ENCODE measurements at regions of chr22 and their contacts with region 1.

Region 1: DNA sequence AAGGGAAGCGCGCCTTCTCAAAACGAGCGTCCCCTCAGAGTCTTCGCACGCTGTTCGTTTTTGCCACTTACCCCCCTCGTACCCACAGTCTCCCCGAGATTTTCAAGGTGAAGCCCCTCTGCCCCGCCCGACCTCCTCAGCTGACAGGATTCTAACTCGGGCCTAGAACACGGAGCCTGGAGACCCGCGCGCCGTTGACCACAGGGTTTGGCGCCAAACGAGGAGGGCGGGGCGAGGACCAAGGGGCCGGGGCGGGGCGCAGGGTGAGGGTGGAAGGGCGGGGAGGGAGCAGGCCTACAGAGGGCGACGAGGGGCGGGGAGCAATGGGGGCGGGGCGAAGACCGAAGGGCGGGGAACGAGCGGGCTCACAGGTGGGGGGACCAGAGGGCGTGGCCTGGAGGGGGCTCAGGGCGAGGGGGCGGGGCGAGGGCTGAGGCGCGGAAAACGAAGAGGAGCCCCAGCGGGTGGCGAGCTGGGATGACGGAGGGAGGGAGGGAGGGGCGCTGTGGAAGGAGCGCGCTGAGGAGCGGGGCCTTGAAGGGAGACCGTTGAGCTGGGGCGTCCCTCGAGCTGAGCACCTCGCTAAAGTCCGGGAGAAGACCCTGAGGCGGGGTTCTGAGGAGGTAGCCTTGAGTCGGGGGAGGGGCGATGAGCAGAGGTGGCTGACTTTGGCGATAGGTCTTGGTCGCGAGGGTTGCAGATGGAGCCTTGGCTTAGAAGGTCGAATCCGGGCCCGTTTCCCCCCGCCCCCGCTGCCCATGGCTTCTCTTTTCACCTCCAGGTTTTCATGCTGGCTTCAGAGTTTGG is at the start of gene DMC1:
- DNase-seq: peak; percentile 89 to 99 (median 97)
- ATAC-seq: peak; percentile 97
- H3K4me3 ChIP-seq: peak within 1 kb of the TSS; percentile 64 to 74
- H3K4me3 Mint-ChIP-seq: peak within 1 kb of the TSS; percentile 87
- H3K27ac ChIP-seq: peak within 1 kb of the TSS; percentile 42 to 43
- H3K27ac Mint-ChIP-seq: peak within 1 kb of the TSS; percentile 78
- H3K4me1 ChIP-seq: peaks cover 15% of the 10 kb centered on the region
- H3K4me1 Mint-ChIP-seq: peaks cover 17% of the 10 kb centered on the region
- H3K27me3 ChIP-seq: no peaks in the 10 kb centered on the region
- H3K27me3 Mint-ChIP-seq: no peaks in the 10 kb centered on the region
- CTCF ChIP-seq: no peak
- total RNA-seq, gene DMC1: 0.27 TPM in 1 of 2 experiments, not detected in the other

Region 2: GRCh38 chr22:38181453-38182247 is 388.5 kb before region 1 on chr22 and contains the start of gene PLA2G6:
- CTCF ChIA-PET with region 1: no interaction called
- POLR2A ChIA-PET with region 1: no interaction called
- intact Hi-C with region 1: loop called (anchors 5 kb)
- DNase-seq: peak; percentile 92 to 98 (median 96)
- ATAC-seq: peak; percentile 87
- H3K4me3 ChIP-seq: peak within 1 kb of the TSS; percentile 69 to 92
- H3K4me3 Mint-ChIP-seq: peak within 1 kb of the TSS; percentile 93
- H3K27ac ChIP-seq: peak within 1 kb of the TSS; percentile 18 to 90
- H3K27ac Mint-ChIP-seq: peak within 1 kb of the TSS; percentile 88
- H3K4me1 ChIP-seq: peaks cover 25% of the 10 kb centered on the region
- H3K4me1 Mint-ChIP-seq: peaks cover 49% of the 10 kb centered on the region
- H3K27me3 ChIP-seq: no peaks in the 10 kb centered on the region
- H3K27me3 Mint-ChIP-seq: no peaks in the 10 kb centered on the region
- CTCF ChIP-seq: no peak
- total RNA-seq, gene PLA2G6: 35.4 to 44.4 TPM

Region 3: GRCh38 chr22:38298312-38299000 is 271.7 kb before region 1 on chr22:
- CTCF ChIA-PET with region 1: interaction called, 4 read pairs
- POLR2A ChIA-PET with region 1: no interaction called
- intact Hi-C with region 1: loop called in 1 of 2 experiments (anchors 5 kb)
- DNase-seq: peak in 6 of 9 experiments; percentile 43 to 67 (median 60)
- ATAC-seq: peak; percentile 84
- H3K4me3 ChIP-seq: no peak overlapping the region
- H3K4me3 Mint-ChIP-seq: no peak overlapping the region
- H3K27ac ChIP-seq: no peak overlapping the region
- H3K27ac Mint-ChIP-seq: no peak overlapping the region
- H3K4me1 ChIP-seq: no peaks in the 10 kb centered on the region
- H3K4me1 Mint-ChIP-seq: no peaks in the 10 kb centered on the region
- H3K27me3 ChIP-seq: no peaks in the 10 kb centered on the region
- H3K27me3 Mint-ChIP-seq: no peaks in the 10 kb centered on the region
- CTCF ChIP-seq: peak; percentile 57

Region 4: GRCh38 chr22:38398609-38399461 is 171.3 kb before region 1 on chr22:
- CTCF ChIA-PET with region 1: no interaction called
- POLR2A ChIA-PET with region 1: no interaction called
- intact Hi-C with region 1: loop called (anchors 2 to 5 kb)
- DNase-seq: peak; percentile 67 to 91 (median 82)
- ATAC-seq: peak; percentile 79
- H3K4me3 ChIP-seq: peak overlapping the region; percentile 55 to 60
- H3K4me3 Mint-ChIP-seq: peak overlapping the region; percentile 81
- H3K27ac ChIP-seq: peak overlapping the region in 1 of 2 experiments; percentile 30
- H3K27ac Mint-ChIP-seq: no peak overlapping the region
- H3K4me1 ChIP-seq: no peaks in the 10 kb centered on the region
- H3K4me1 Mint-ChIP-seq: peaks cover 18% of the 10 kb centered on the region
- H3K27me3 ChIP-seq: no peaks in the 10 kb centered on the region
- H3K27me3 Mint-ChIP-seq: no peaks in the 10 kb centered on the region
- CTCF ChIP-seq: no peak

Region 5: GRCh38 chr22:38506118-38506962 is 63.8 kb before region 1 on chr22 and contains the start of gene DDX17:
- CTCF ChIA-PET with region 1: interaction called, 3 read pairs
- POLR2A ChIA-PET with region 1: no interaction called
- intact Hi-C with region 1: loop called (anchors 1 kb)
- DNase-seq: peak; percentile 91 to 99 (median 95)
- ATAC-seq: peak; percentile 89
- H3K4me3 ChIP-seq: peak within 1 kb of the TSS; percentile 83 to 91
- H3K4me3 Mint-ChIP-seq: peak within 1 kb of the TSS; percentile 98
- H3K27ac ChIP-seq: peak within 1 kb of the TSS; percentile 97 to 99
- H3K27ac Mint-ChIP-seq: peak within 1 kb of the TSS; percentile 100
- H3K4me1 ChIP-seq: peaks cover 38% of the 10 kb centered on the region
- H3K4me1 Mint-ChIP-seq: peaks cover 46% of the 10 kb centered on the region
- H3K27me3 ChIP-seq: no peaks in the 10 kb centered on the region
- H3K27me3 Mint-ChIP-seq: no peaks in the 10 kb centered on the region
- CTCF ChIP-seq: no peak
- total RNA-seq, gene DDX17: 348 to 386 TPM

Region 6: DNA sequence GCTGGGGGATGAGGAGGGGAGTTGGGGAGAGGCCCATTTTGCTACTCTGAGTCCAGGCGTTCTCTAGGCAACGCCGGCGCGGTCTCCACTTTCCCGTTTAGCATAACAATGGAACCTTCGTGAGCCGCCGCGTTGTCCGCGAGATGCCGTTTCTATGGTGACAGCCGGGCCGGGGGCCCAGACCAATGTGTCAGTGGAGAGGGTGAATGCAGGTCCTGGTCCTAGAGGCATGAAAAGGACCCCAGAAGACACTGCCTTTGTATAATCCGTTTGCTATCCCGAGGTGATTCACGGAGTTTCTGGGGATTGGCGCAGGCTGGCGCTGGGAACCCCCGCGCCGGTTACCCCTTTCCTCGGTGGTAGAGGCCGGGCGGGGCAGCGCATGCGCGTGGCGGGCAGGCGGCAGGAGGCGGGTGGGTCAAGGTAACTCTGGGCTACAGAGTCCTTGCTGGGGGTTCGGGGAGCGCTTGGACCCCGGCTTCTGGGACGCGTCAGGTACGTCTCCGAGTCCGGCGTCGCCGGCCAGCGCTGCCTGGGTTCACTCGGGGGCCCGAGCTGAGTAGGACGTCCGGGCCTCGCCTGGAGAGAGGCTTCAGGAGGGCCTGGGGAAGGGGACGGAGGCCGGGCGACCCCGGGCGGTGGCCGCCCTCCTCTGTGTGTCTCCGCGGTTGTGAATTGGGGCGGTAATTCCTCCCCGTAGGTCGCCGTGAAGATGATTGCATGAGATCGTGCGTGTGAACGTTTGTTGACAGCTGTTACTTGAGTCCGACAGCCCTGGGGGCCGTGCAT is 86.3 kb after region 1 on chr22 and contains the starts of genes CBY1 and FAM227A:
- CTCF ChIA-PET with region 1: no interaction called
- POLR2A ChIA-PET with region 1: no interaction called
- intact Hi-C with region 1: loop called (anchors 1 to 2 kb)
- DNase-seq: peak; percentile 76 to 94 (median 87)
- ATAC-seq: peak; percentile 84
- H3K4me3 ChIP-seq: peak within 1 kb of the TSS; percentile 75 to 94
- H3K4me3 Mint-ChIP-seq: peak within 1 kb of the TSS; percentile 96
- H3K27ac ChIP-seq: peak within 1 kb of the TSS; percentile 94 to 96
- H3K27ac Mint-ChIP-seq: peak within 1 kb of the TSS; percentile 99
- H3K4me1 ChIP-seq: peaks cover 11% of the 10 kb centered on the region
- H3K4me1 Mint-ChIP-seq: peaks cover 30% of the 10 kb centered on the region
- H3K27me3 ChIP-seq: no peaks in the 10 kb centered on the region
- H3K27me3 Mint-ChIP-seq: no peaks in the 10 kb centered on the region
- CTCF ChIP-seq: no peak
- total RNA-seq, gene CBY1: 7.6 to 8.9 TPM
- total RNA-seq, gene FAM227A: 0.73 TPM in 1 of 2 experiments, not detected in the other

Region 7: GRCh38 chr22:38694049-38694448 is 123.9 kb after region 1 on chr22:
- CTCF ChIA-PET with region 1: no interaction called
- POLR2A ChIA-PET with region 1: no interaction called
- intact Hi-C with region 1: no loop called
- DNase-seq: no peak
- ATAC-seq: no peak
- H3K4me3 ChIP-seq: no peak overlapping the region
- H3K4me3 Mint-ChIP-seq: no peak overlapping the region
- H3K27ac ChIP-seq: no peak overlapping the region
- H3K27ac Mint-ChIP-seq: no peak overlapping the region
- H3K4me1 ChIP-seq: peaks cover 31% of the 10 kb centered on the region
- H3K4me1 Mint-ChIP-seq: peaks cover 62% of the 10 kb centered on the region
- H3K27me3 ChIP-seq: no peaks in the 10 kb centered on the region
- H3K27me3 Mint-ChIP-seq: no peaks in the 10 kb centered on the region
- CTCF ChIP-seq: no peak

Region 8: GRCh38 chr22:38705235-38706100 is 135.3 kb after region 1 on chr22 and contains the start of gene GTPBP1:
- CTCF ChIA-PET with region 1: no interaction called
- POLR2A ChIA-PET with region 1: no interaction called
- intact Hi-C with region 1: loop called (anchors 1 to 2 kb)
- DNase-seq: peak; percentile 91 to 100 (median 95)
- ATAC-seq: peak; percentile 76
- H3K4me3 ChIP-seq: peak within 1 kb of the TSS; percentile 63 to 84
- H3K4me3 Mint-ChIP-seq: peak within 1 kb of the TSS; percentile 93
- H3K27ac ChIP-seq: peak within 1 kb of the TSS; percentile 69 to 77
- H3K27ac Mint-ChIP-seq: peak within 1 kb of the TSS; percentile 95
- H3K4me1 ChIP-seq: peaks cover 47% of the 10 kb centered on the region
- H3K4me1 Mint-ChIP-seq: peaks cover 64% of the 10 kb centered on the region
- H3K27me3 ChIP-seq: no peaks in the 10 kb centered on the region
- H3K27me3 Mint-ChIP-seq: no peaks in the 10 kb centered on the region
- CTCF ChIP-seq: no peak
- total RNA-seq, gene GTPBP1: 341 to 346 TPM

Region 9: GRCh38 chr22:38718414-38718813 is 148.2 kb after region 1 on chr22:
- CTCF ChIA-PET with region 1: no interaction called
- POLR2A ChIA-PET with region 1: no interaction called
- intact Hi-C with region 1: no loop called
- DNase-seq: no peak
- ATAC-seq: no peak
- H3K4me3 ChIP-seq: no peak overlapping the region
- H3K4me3 Mint-ChIP-seq: no peak overlapping the region
- H3K27ac ChIP-seq: no peak overlapping the region
- H3K27ac Mint-ChIP-seq: no peak overlapping the region
- H3K4me1 ChIP-seq: no peaks in the 10 kb centered on the region
- H3K4me1 Mint-ChIP-seq: peaks cover 21% of the 10 kb centered on the region
- H3K27me3 ChIP-seq: no peaks in the 10 kb centered on the region
- H3K27me3 Mint-ChIP-seq: no peaks in the 10 kb centered on the region
- CTCF ChIP-seq: no peak

Measured in CD8-positive, alpha-beta T cell (primary cell).